WTC11 (cell line): ENCODE measurements at regions of chr18 and their contacts with region 1.

Region 1: GRCh38 chr18:80171054-80171872 is 62.2 kb downstream of the ADNP2 start:
- DNase-seq: peak; percentile 85
- ATAC-seq: peak; percentile 78
- H3K4me3 Mint-ChIP-seq: peak overlapping the region; percentile 26; the same call in 1 of the 2 replicates
- H3K27ac Mint-ChIP-seq: no peak overlapping the region
- H3K4me1 Mint-ChIP-seq: no peaks in the 10 kb centered on the region; the same call in 1 of the 2 replicates
- H3K27me3 Mint-ChIP-seq: peaks cover 4% of the 10 kb centered on the region; the same call in 1 of the 2 replicates
- CTCF ChIP-seq: peak; percentile 97

Region 2: GRCh38 chr18:80157708-80158343 is 13.4 kb before region 1 on chr18:
- CTCF ChIA-PET with region 1: interaction called, 24 read pairs
- POLR2A ChIA-PET with region 1: no interaction called
- DNase-seq: peak; percentile 79
- ATAC-seq: peak; percentile 37; the same call in 1 of the 2 replicates
- H3K4me3 Mint-ChIP-seq: no peak overlapping the region
- H3K27ac Mint-ChIP-seq: no peak overlapping the region
- H3K4me1 Mint-ChIP-seq: no peaks in the 10 kb centered on the region; the same call in 1 of the 2 replicates
- H3K27me3 Mint-ChIP-seq: no peaks in the 10 kb centered on the region
- CTCF ChIP-seq: peak; percentile 82